Adrenal gland (tissue), 19 donors: ENCODE measurements at regions of chr6 and their contacts with region 1.

Region 1: GRCh38 chr6:43575772-43576551 is at the starts of genes POLH and XPO5:
- DNase-seq: peak; percentile 89 to 95 (median 91)
- H3K4me3 ChIP-seq: peak within 1 kb of the TSS; percentile 67 to 99 (median 82)
- H3K27ac ChIP-seq: peak within 1 kb of the TSS in 4 of 5 donors; percentile 47 to 90 (median 70)
- H3K4me1 ChIP-seq: peaks cover 19 to 26% of the 10 kb centered on the region in 2 donors
- H3K27me3 ChIP-seq: no peaks in the 10 kb centered on the region
- CTCF ChIP-seq: peak in 1 of 6 experiments; percentile 19
- POLR2A ChIP-seq: peak; percentile 89 to 95
- total RNA-seq, gene POLH: 7.5 to 25.0 (median 14.0) TPM
- total RNA-seq, gene XPO5: 16.1 to 70.6 (median 22.9) TPM

Region 2: DNA sequence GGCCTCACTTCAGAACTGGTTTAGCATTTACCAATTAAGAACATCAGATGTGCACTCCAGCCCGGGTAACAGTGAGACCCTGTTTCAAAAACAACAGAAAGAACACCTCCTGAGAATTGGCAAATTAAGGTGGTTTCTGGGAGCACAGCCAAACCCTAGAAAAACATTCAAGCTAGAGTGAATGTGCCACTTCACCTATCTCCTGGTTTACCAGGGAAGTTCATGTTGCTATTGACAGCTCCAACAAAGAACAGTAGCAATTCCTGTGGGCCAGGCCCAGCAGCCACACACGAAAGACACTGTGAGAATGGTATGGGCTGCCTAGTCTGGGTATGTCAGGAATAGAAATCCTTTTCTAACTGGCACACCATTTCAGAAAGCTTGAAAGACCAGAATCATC is 54.1 kb before region 1 on chr6:
- intact Hi-C with region 1: loop called in 1 of 2 experiments (anchors 10 kb)
- DNase-seq: no peak
- H3K4me3 ChIP-seq: no peak overlapping the region
- H3K27ac ChIP-seq: no peak overlapping the region
- H3K4me1 ChIP-seq: peaks cover 9 to 15% of the 10 kb centered on the region in 2 donors
- H3K27me3 ChIP-seq: no peaks in the 10 kb centered on the region
- CTCF ChIP-seq: no peak
- POLR2A ChIP-seq: no peak